Adrenal gland (tissue), 19 donors: ENCODE measurements at regions of chr9 and their contacts with region 1.

Region 1: GRCh38 chr9:33187519-33188218 is 20.5 kb upstream of the B4GALT1 start:
- DNase-seq: no peak
- H3K4me3 ChIP-seq: no peak overlapping the region
- H3K27ac ChIP-seq: no peak overlapping the region
- H3K4me1 ChIP-seq: peaks cover 0 to 9% of the 10 kb centered on the region in 2 donors
- H3K27me3 ChIP-seq: no peaks in the 10 kb centered on the region
- CTCF ChIP-seq: no peak
- POLR2A ChIP-seq: no peak

Region 2: GRCh38 chr9:33223696-33224095 is 36.0 kb after region 1 on chr9:
- intact Hi-C with region 1: loop called (anchors 5 kb)
- DNase-seq: no peak
- H3K4me3 ChIP-seq: no peak overlapping the region
- H3K27ac ChIP-seq: no peak overlapping the region
- H3K4me1 ChIP-seq: peaks cover 5% of the 10 kb centered on the region in 2 donors
- H3K27me3 ChIP-seq: no peaks in the 10 kb centered on the region
- CTCF ChIP-seq: peak in 1 of 6 experiments; percentile 11
- POLR2A ChIP-seq: no peak

Region 3: GRCh38 chr9:33233681-33234473 is 46.2 kb after region 1 on chr9:
- intact Hi-C with region 1: no loop called
- DNase-seq: peak; percentile 57 to 80 (median 77)
- H3K4me3 ChIP-seq: no peak overlapping the region
- H3K27ac ChIP-seq: no peak overlapping the region
- H3K4me1 ChIP-seq: no peaks in the 10 kb centered on the region
- H3K27me3 ChIP-seq: no peaks in the 10 kb centered on the region
- CTCF ChIP-seq: no peak
- POLR2A ChIP-seq: no peak

Region 4: GRCh38 chr9:33611358-33611757 is 423.7 kb after region 1 on chr9:
- intact Hi-C with region 1: no loop called
- DNase-seq: no peak
- H3K4me3 ChIP-seq: no peak overlapping the region
- H3K27ac ChIP-seq: no peak overlapping the region
- H3K4me1 ChIP-seq: no peaks in the 10 kb centered on the region
- H3K27me3 ChIP-seq: no peaks in the 10 kb centered on the region
- CTCF ChIP-seq: no peak
- POLR2A ChIP-seq: no peak